Activated CD4-positive, alpha-beta T cell treated with anti-CD3 and anti-CD28 coated beads for 36 hours (primary cell): ENCODE measurements at regions of chr5 and their contacts with region 1.

Region 1: GRCh38 chr5:10441083-10441991 is at the start of gene ROPN1L:
- DNase-seq: peak; percentile 87
- ATAC-seq: peak; percentile 98
- H3K4me3 Mint-ChIP-seq: peak within 1 kb of the TSS; percentile 72
- H3K27ac Mint-ChIP-seq: no peak within 1 kb of the TSS
- H3K4me1 Mint-ChIP-seq: peaks cover 31% of the 10 kb centered on the region
- H3K27me3 Mint-ChIP-seq: peaks cover 3% of the 10 kb centered on the region
- total RNA-seq, gene ROPN1L: 0.28 TPM in 1 of 2 experiments, not detected in the other

Region 2: DNA sequence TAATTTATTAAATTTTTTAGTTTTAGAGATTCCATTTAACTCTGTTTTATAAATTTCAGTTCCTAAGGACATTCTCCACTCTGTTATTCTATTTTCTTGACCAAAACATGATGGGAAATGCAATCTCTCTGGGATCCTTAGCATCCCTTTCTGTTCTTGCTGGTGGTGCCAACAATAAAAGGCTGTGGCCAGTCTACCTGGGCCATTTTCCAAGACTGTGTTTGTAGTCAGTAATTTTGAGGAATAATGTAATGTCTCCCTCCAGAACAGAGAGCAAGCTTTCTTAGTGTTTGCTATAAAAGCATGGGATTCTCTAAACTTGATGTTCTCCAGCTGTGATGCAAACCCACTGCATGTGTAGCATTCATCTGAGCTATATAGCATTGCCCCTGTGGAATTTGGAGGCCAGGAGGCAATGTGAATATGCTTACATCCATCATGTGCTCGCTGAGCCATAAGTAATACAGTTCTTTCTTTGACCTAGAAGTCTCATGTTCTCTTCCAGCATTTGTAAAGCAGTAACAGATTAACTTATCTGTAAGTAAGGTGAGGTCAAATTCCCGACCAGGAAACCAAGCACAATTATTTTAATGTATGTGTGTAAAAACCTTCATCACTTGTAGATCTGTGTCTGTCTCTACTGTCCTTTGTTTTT is 599.7 kb before region 1 on chr5:
- CTCF ChIA-PET with region 1: no interaction called
- POLR2A ChIA-PET with region 1: no interaction called
- intact Hi-C with region 1: no loop called
- DNase-seq: no peak
- ATAC-seq: no peak
- H3K4me3 Mint-ChIP-seq: no peak overlapping the region
- H3K27ac Mint-ChIP-seq: no peak overlapping the region
- H3K4me1 Mint-ChIP-seq: no peaks in the 10 kb centered on the region
- H3K27me3 Mint-ChIP-seq: no peaks in the 10 kb centered on the region

Region 3: GRCh38 chr5:10489810-10490426 is 48.6 kb after region 1 on chr5:
- CTCF ChIA-PET with region 1: no interaction called
- POLR2A ChIA-PET with region 1: no interaction called
- intact Hi-C with region 1: no loop called
- DNase-seq: peak; percentile 16
- ATAC-seq: peak; percentile 72
- H3K4me3 Mint-ChIP-seq: no peak overlapping the region
- H3K27ac Mint-ChIP-seq: no peak overlapping the region
- H3K4me1 Mint-ChIP-seq: peaks cover 17% of the 10 kb centered on the region
- H3K27me3 Mint-ChIP-seq: no peaks in the 10 kb centered on the region

Region 4: DNA sequence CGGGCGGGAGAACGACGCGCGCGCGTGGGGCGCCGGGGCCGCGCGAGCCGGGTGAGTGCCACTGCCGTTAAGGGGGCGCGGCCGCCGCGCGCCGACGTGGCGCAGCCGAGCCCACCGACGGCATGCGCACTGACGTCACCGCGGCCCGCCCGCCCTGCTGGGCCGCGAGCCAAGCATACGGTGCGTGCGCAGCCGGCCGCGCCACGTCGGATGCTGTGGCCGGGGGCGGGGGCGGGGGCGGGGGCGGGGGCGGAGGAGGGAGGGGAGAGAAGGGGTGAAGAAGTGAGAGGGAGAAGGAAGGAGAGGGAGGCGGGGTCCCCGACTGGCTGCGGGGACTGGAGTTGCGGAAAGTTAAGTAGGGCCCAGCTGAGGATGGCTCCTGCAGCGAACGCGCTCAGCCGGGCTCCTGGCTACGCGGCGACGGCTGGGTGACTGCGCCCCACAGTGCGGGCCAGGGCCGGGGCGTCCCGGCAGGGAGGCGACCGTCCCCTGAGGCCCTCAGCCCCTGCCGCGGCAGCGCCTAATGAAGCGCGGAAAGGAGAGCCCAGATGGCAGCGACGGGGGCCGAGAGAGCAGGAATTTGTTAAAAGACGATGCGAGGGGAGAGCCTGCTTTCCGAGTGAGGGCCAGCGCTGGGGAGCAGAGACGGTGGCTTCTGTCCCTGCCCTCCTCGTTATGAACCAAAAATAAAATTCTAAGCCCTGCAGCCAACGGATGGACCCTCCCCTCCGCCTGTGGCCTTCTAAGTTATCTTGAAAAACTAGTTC is 320.0 kb after region 1 on chr5 and contains the start of gene DAP:
- CTCF ChIA-PET with region 1: no interaction called
- POLR2A ChIA-PET with region 1: no interaction called
- intact Hi-C with region 1: loop called in 1 of 2 experiments (anchors 2 kb)
- DNase-seq: peak; percentile 92
- ATAC-seq: peak; percentile 82
- H3K4me3 Mint-ChIP-seq: peak within 1 kb of the TSS; percentile 83
- H3K27ac Mint-ChIP-seq: peak within 1 kb of the TSS; percentile 90
- H3K4me1 Mint-ChIP-seq: peaks cover 49% of the 10 kb centered on the region
- H3K27me3 Mint-ChIP-seq: peaks cover 3% of the 10 kb centered on the region
- total RNA-seq, gene DAP: 41.4 to 44.0 TPM